ENCODE measurements at regions of chr6 and their contacts with region 1.

Region 1: GRCh38 chr6:44456070-44456965 is 68.8 kb downstream of the CDC5L start:
- DNase-seq: peak; percentile 49
- H3K4me3 Mint-ChIP-seq: no peak overlapping the region
- H3K27ac Mint-ChIP-seq: no peak overlapping the region
- H3K4me1 Mint-ChIP-seq: peaks cover 10% of the 10 kb centered on the region
- H3K27me3 Mint-ChIP-seq: peaks cover 5% of the 10 kb centered on the region

Region 2: GRCh38 chr6:44431118-44431725 is 25.1 kb before region 1 on chr6:
- CTCF ChIA-PET with region 1: interaction called, 28 read pairs
- POLR2A ChIA-PET with region 1: no interaction called
- DNase-seq: peak; percentile 51
- H3K4me3 Mint-ChIP-seq: no peak overlapping the region
- H3K27ac Mint-ChIP-seq: no peak overlapping the region
- H3K4me1 Mint-ChIP-seq: peaks cover 1% of the 10 kb centered on the region
- H3K27me3 Mint-ChIP-seq: no peaks in the 10 kb centered on the region

Measured in activated CD4-positive, alpha-beta memory T cell treated with anti-CD3 and anti-CD28 coated beads, Interleukin-2, amount 10 ng/mL, durations not matched to agents 7 days and 5 days (primary cell).